A549 (cell line): ENCODE measurements at regions of chr3 and their contacts with region 1.

Region 1: DNA sequence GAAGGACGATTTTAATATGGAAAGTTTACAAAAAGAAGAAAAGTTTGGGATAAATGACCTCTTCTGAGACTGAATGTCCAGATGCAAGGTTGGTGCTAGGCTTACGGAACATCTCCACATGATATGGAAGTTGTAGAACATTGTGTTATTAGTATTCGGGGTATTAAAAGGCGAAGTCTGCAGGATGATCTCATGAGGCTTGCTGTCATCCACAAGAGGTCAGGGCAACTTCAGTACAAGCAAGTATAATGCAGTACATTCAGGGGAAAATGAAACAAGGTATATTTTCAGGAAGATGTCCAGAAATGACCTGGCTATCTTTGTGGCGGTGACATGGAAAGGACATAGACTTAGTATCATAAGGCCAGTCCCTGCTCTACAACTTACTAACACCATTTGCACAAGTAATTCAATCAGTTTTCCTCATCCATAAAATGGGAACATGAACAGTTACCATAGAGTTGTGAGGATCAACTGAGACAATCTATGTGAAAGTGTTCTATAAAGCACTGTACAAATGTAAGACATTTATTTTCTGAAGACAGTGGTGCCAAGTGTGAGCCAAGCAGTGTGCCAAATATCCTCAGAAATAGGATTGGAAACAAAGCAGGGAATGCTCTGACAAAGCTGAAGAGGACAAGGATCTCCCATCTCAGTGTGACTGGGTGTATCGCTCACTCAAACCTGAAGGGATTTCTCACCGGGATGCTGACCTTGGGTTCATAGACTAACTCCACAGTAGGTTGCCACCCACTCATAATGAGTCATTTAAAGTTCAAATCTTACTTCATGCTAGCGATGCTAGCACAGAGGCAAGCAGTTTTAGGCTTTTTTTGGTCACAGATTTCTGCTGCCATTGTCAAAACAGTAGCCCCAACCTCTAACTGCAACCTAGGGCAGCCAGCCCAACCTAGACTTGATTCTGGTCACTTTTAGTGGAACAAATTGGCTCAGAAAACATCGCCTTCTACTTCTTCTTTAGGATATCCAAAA is 118.3 kb downstream of the TIGIT start:
- DNase-seq: peak; percentile 7 to 50
- ATAC-seq: peak; percentile 89 to 93
- H3K4me3 ChIP-seq: no peak overlapping the region
- H3K27ac ChIP-seq: peak overlapping the region in 1 of 2 experiments; percentile 61; a peak in 4 of 6 replicates
- H3K4me1 ChIP-seq: peaks cover 27% of the 10 kb centered on the region
- CTCF ChIP-seq: no peak
- EP300 ChIP-seq: no peak
- POLR2A ChIP-seq: no peak
- RAD21 ChIP-seq: no peak

Region 2: GRCh38 chr3:114400371-114400770 is 11.7 kb before region 1 on chr3:
- CTCF ChIA-PET with region 1: interaction called, 10 read pairs
- POLR2A ChIA-PET with region 1: no interaction called
- DNase-seq: no peak
- ATAC-seq: no peak
- H3K4me3 ChIP-seq: no peak overlapping the region
- H3K27ac ChIP-seq: no peak overlapping the region
- H3K4me1 ChIP-seq: no peaks in the 10 kb centered on the region
- CTCF ChIP-seq: no peak
- EP300 ChIP-seq: no peak
- POLR2A ChIP-seq: no peak
- RAD21 ChIP-seq: no peak